Calu3 (cell line): ENCODE measurements at regions of chr17 and their contacts with region 1.

Region 1: DNA sequence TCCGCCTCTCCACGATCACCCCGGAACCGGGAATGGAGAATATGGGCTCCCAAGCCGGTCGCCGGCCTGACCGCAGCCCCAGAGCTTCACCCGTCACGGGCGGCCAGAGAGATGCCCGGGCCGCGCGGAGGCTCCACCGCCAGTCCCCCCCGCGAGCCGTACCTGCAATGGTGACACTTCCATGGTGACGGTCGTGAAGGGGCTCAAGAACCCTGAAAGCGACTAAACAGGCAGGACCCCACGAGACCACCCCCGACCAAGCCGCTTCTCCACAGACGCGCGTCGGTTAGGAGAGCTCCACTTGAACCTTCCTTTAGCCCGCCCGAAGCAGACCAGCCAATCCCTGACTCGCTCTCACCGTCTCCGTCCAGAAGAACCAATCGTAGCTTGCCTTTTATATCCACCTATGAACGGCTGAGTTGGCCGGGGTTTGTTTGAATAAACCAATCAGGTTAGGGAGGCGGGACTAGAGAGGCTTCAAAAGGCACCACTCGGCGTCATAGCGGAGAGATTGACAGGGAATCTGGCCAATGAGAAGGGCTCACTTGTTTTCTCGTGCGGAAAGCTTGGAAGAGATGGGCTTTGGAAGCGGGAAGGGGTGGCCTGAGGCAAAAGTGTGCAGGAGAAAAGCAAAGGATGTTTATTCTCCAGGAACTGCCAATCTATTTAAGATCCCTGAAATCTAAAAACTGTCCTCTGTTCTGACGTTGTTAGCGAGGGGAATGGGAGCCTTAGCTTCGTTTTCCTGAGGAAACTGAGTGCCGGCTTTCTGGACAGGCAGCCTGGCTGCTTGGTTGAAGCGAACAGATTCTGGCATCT is at the start of gene TOP2A:
- DNase-seq: peak; percentile 100
- H3K4me3 Mint-ChIP-seq: peak within 1 kb of the TSS; percentile 96
- H3K27ac Mint-ChIP-seq: peak within 1 kb of the TSS; percentile 94
- H3K4me1 Mint-ChIP-seq: peaks cover 42% of the 10 kb centered on the region
- H3K27me3 Mint-ChIP-seq: no peaks in the 10 kb centered on the region
- CTCF ChIP-seq: no peak
- total RNA-seq, gene TOP2A: 1,389 and 1,672 TPM in 2 replicates

Region 2: GRCh38 chr17:39845052-39845846 is 572.6 kb before region 1 on chr17:
- CTCF ChIA-PET with region 1: no interaction called
- intact Hi-C with region 1: loop called (anchors 10 kb)
- DNase-seq: peak; percentile 81
- H3K4me3 Mint-ChIP-seq: no peak overlapping the region
- H3K27ac Mint-ChIP-seq: no peak overlapping the region
- H3K4me1 Mint-ChIP-seq: peaks cover 10% of the 10 kb centered on the region
- H3K27me3 Mint-ChIP-seq: no peaks in the 10 kb centered on the region
- CTCF ChIP-seq: no peak

Region 3: DNA sequence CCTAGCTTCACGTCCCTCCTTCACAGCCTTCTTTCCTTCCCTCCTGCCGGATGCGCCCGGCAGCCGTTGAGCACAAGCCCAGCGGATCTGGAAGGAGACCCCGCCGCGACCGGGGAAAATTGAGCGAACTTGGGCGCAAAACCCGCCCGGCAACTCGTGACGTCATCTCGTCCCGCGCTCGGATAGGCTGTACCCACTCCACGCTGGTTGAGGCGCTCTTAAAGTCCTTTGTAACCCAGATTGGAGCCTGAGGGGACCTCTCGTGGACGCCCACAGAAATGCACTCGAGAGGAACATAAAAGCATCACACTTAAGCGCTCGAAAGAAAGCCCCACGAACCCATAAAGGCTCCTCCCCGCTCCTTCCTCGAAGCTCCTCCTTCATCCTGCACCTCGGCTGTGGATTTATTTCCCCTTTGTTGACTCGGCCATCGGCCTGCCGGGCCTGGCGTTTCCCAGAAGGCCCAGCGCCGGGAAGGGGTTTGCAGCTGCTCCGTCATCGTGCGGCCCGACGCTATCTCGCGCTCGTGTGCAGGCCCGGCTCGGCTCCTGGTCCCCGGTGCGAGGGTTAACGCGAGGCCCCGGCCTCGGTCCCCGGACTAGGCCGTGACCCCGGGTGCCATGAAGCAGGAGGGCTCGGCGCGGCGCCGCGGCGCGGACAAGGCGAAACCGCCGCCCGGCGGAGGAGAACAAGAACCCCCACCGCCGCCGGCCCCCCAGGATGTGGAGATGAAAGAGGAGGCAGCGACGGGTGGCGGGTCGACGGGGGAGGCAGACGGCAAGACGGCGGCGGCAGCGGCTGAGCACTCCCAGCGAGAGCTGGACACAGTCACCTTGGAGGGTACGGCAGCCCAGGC is 437.2 kb before region 1 on chr17 and contains the start of gene PSMD3:
- CTCF ChIA-PET with region 1: interaction called, 118 read pairs
- intact Hi-C with region 1: loop called (anchors 1 kb)
- DNase-seq: peak; percentile 100
- H3K4me3 Mint-ChIP-seq: peak within 1 kb of the TSS; percentile 77
- H3K27ac Mint-ChIP-seq: peak within 1 kb of the TSS; percentile 81
- H3K4me1 Mint-ChIP-seq: peaks cover 26% of the 10 kb centered on the region
- H3K27me3 Mint-ChIP-seq: peaks cover 43% of the 10 kb centered on the region
- CTCF ChIP-seq: no peak
- total RNA-seq, gene PSMD3: 2,152 and 2,179 TPM in 2 replicates

Region 4: GRCh38 chr17:40309031-40309948 is 108.5 kb before region 1 on chr17 and contains the start of gene RARA:
- CTCF ChIA-PET with region 1: interaction called, 28 read pairs
- intact Hi-C with region 1: no loop called
- DNase-seq: peak; percentile 90
- H3K4me3 Mint-ChIP-seq: no peak within 1 kb of the TSS
- H3K27ac Mint-ChIP-seq: no peak within 1 kb of the TSS
- H3K4me1 Mint-ChIP-seq: peaks cover 2% of the 10 kb centered on the region
- H3K27me3 Mint-ChIP-seq: no peaks in the 10 kb centered on the region
- CTCF ChIP-seq: no peak
- total RNA-seq, gene RARA: 150 and 170 TPM in 2 replicates

Region 5: DNA sequence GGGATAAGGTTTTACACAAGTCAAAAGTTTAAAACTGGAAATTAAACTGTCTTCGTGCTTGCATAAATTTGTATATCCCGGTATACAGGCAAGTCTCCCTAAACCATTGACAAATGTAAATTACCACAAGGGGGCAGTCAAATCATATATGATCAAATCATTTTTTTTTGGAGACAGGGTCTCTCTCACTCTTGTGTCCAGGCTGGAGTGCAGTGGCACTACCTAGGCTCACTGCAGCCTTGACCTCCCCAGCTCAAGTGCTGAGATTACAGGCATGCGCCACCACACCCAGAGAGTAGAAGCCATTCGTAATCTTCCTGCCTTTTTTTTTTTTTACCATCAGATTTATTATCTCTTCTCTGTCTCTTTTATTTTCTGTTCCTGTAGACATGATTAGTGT is 18.6 kb before region 1 on chr17:
- CTCF ChIA-PET with region 1: interaction called, 26 read pairs
- intact Hi-C with region 1: no loop called
- DNase-seq: no peak
- H3K4me3 Mint-ChIP-seq: no peak overlapping the region
- H3K27ac Mint-ChIP-seq: no peak overlapping the region
- H3K4me1 Mint-ChIP-seq: no peaks in the 10 kb centered on the region
- H3K27me3 Mint-ChIP-seq: no peaks in the 10 kb centered on the region
- CTCF ChIP-seq: no peak

Region 6: GRCh38 chr17:40510328-40510648 is 92.5 kb after region 1 on chr17:
- CTCF ChIA-PET with region 1: interaction called, 16 read pairs
- intact Hi-C with region 1: no loop called
- DNase-seq: peak; percentile 88
- H3K4me3 Mint-ChIP-seq: no peak overlapping the region
- H3K27ac Mint-ChIP-seq: no peak overlapping the region
- H3K4me1 Mint-ChIP-seq: peaks cover 41% of the 10 kb centered on the region
- H3K27me3 Mint-ChIP-seq: peaks cover 61% of the 10 kb centered on the region
- CTCF ChIP-seq: no peak

Region 7: DNA sequence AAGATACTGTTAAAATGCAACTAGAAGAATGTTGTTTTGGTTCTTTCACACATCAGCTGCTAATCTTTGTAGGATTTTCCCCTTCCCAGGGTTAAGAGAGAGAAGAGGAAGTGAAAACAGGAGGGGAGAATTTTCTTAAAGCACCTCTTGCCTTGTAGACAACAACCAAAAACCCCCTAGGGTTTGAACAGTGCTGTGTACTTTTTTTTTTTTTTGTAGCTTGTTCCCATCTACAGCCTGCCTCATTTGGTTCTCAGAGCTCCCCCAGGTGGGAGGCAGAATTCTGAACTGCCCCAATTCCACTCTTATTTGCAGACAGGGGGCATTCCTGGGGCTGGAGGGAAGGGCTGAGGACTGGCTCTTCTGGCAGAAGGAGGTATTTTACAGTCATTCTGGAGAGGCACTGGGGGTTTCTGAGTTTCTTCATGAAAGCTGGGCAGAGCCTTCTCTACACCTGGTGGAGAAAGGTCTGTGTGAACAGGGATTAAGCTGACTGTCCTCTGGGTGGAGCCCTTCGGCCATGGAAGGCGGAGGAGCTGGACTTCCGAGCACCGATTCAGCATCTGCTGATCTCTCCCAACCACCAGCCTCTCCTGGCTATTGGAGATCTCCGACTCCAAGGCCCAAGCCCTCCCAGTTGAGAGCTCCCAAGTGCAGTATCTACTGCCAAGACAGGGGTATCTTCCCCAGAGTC is 197.6 kb after region 1 on chr17:
- CTCF ChIA-PET with region 1: interaction called, 15 read pairs
- intact Hi-C with region 1: no loop called
- DNase-seq: peak; percentile 100
- H3K4me3 Mint-ChIP-seq: no peak overlapping the region
- H3K27ac Mint-ChIP-seq: no peak overlapping the region
- H3K4me1 Mint-ChIP-seq: peaks cover 26% of the 10 kb centered on the region
- H3K27me3 Mint-ChIP-seq: peaks cover 97% of the 10 kb centered on the region
- CTCF ChIP-seq: no peak

Region 8: GRCh38 chr17:40632216-40632615 is 214.4 kb after region 1 on chr17:
- CTCF ChIA-PET with region 1: no interaction called
- intact Hi-C with region 1: no loop called
- DNase-seq: peak; percentile 4
- H3K4me3 Mint-ChIP-seq: no peak overlapping the region
- H3K27ac Mint-ChIP-seq: no peak overlapping the region
- H3K4me1 Mint-ChIP-seq: no peaks in the 10 kb centered on the region
- H3K27me3 Mint-ChIP-seq: no peaks in the 10 kb centered on the region
- CTCF ChIP-seq: no peak

Region 9: DNA sequence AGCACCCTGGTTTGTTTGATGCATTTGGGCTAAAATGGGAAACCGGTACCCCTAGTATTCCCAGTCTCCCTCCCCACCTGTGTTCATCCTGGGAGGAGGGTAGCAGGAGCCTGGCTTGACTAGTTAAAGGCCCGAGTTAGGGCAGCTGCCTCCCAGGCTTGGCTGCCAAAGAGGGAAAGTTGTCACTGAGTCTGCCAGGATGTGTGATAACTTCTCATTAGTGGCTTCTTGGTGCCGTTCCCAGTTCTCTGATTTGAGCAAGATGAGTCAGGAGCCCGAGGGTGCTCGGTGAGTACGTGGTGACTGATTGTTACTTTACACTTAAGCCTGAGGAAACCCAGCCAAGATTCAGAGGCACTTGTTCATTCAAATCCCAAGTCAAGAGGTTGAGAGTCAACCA is 1046.9 kb after region 1 on chr17:
- CTCF ChIA-PET with region 1: no interaction called
- intact Hi-C with region 1: no loop called
- DNase-seq: peak; percentile 74
- H3K4me3 Mint-ChIP-seq: no peak overlapping the region
- H3K27ac Mint-ChIP-seq: peak overlapping the region; percentile 7
- H3K4me1 Mint-ChIP-seq: peaks cover 13% of the 10 kb centered on the region
- H3K27me3 Mint-ChIP-seq: no peaks in the 10 kb centered on the region
- CTCF ChIP-seq: no peak